Left cardiac atrium (tissue), 4 donors: ENCODE measurements at regions of chr17 and their contacts with region 1.

Region 1: DNA sequence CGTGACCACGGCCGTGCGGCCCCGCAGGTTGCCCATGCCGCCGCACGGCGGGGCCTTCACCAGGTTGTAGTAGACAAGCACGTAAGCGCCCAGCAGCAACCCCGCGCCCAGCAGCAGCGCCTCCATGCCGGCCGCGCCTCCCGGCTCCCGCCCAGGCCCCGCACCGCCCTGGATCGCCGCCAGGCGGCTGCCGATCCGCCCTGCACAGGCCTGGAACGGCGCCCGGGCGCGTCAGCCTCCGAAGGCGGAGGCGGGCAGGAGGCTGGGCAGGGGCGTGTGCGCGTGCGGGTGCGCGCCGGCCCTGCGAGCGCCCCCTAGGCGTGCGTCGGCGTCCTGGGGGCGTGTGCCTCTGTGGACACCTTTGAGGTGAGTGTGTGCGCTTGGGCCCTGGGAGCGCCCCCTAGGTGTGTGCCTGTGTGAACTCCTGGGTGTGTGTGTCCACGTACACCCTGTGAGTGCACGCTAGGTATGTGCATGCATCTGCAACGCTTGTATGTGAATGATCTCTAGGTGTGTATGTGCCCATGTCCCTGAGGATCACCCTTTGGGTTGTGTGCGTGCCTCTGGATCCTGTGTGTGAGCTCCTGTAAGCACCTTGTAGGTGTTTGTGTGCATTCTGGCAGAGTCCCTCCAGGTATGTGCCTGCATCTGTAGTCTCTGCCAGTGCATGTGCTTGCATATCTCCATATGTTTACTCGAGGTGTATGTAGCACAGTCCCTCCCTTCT is at the start of gene DHRS13:
- DNase-seq: peak; percentile 91
- ATAC-seq: peak; percentile 94 to 95
- total RNA-seq, gene DHRS13: 2.8 to 3.7 TPM

Region 2: DNA sequence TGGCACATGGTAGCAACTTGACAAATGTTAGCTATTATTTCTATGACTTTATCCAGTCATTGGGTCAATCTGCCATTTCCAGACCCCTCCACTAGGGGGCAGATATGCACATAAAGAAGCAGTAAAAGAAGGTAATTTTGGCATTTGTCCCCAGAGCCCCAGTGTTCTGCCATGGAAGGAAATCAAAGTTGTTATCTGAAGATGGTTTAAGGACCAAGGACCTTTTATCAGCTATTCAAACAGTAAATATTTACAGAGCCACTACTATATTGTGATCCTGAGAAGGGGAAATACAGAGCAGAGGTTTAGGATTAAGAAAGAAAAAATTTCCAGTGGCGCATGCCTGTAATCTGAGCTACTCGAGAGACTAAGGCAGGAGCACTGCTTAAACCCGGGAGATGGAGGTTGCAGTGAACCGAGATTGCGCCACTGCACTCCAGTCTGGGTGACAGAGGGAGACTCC is 139.1 kb before region 1 on chr17:
- intact Hi-C with region 1: loop called in 1 of 2 experiments (anchors 10 kb)
- DNase-seq: peak; percentile 78
- ATAC-seq: peak in 1 of 2 donors; percentile 37

Region 3: GRCh38 chr17:28951991-28952975 is 49.3 kb after region 1 on chr17:
- intact Hi-C with region 1: loop called in 1 of 2 experiments (anchors 5 kb)
- DNase-seq: peak; percentile 97
- ATAC-seq: peak; percentile 81 to 88